ENCODE measurements at regions of chr17 and their contacts with region 1.

Region 1: DNA sequence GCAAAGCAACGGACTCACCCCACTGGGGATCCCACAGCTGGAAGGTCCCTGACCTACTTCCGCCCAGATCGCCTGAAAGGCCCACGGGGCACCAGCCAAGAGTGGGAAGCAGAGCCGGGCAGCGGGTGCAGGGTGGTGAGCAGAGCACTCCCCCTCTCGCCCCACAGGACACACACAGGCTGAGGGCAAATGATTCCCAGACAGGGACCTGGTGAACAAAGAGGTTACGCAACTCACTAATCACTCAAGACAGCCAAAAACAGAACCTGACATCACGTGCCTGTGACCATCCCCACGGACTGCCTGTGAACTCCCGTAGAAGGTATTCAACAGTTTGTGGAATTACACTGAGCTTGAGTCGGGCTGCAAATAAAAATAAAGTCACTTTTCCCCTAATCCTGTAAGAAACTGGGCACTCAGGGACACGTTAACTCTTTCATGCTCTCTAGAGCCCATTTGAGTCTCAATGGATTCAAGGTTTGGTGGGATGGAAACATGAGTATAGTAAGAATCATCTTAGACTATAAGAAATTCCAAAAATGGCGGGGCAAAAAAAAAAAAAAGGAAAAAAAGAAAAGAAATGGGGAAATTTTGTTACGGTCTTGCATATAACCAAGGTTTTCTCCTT is 396.1 kb downstream of the SOX9 start:
- DNase-seq: no peak
- ATAC-seq: peak; percentile 53
- H3K4me3 ChIP-seq: no peak overlapping the region
- H3K27ac ChIP-seq: peak overlapping the region; percentile 84
- H3K4me1 ChIP-seq: peaks cover 56% of the 10 kb centered on the region
- H3K27me3 ChIP-seq: no peaks in the 10 kb centered on the region
- CTCF ChIP-seq: peak in 2 of 3 experiments; percentile 8 to 37; a peak in 1 of 6 replicates
- EP300 ChIP-seq: no peak
- POLR2A ChIP-seq: no peak
- RAD21 ChIP-seq: no peak

Region 2: DNA sequence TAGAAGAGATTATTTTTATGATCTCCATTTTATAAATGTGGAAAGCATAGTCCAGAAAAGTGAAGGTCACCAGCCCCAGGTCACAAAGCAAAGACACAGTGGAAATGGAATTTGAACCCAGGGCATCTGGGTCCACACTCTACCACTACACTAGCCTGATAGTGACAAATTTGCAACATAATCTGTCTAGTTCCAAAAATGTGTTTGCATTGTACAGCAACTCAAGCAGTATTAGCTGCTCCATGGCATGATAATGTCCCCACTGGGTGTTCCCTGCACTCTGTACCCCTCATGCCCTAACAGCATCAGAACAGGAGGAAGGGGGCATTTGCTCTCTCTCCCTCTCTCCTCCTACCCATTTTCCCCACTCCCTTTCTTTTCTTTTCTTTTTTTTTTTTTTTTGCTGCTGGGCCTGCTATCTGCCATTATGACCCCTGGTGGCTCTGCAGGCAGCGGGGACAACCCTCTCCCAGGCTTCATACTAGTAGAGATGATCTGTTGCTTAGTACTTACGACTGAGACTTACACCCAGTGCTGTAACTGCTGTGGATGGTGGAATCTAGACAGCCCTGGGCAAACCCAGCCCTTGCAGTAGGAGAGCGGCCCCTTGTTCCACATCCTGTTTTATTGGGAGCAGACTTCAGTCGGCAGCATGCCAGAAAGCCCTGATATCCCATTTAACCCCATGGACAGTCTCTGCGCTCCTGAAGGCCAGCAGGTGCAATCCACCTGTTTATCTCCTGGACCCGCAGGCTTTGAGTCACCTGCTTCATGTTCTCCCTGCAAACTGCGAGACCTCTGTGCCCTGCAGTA is 89.7 kb before region 1 on chr17:
- CTCF ChIA-PET with region 1: interaction called, 53 read pairs
- POLR2A ChIA-PET with region 1: interaction called, 111 read pairs
- RAD21 ChIA-PET with region 1: interaction called, 361 read pairs
- SMC1A ChIA-PET with region 1: interaction called, 291 read pairs
- in situ Hi-C with region 1: loop called (anchors 5 kb)
- intact Hi-C with region 1: loop called (anchors 1 kb)
- DNase-seq: no peak
- ATAC-seq: no peak
- H3K4me3 ChIP-seq: no peak overlapping the region
- H3K27ac ChIP-seq: peak overlapping the region; percentile 21; the same call in 1 of the 2 replicates
- H3K4me1 ChIP-seq: peaks cover 33% of the 10 kb centered on the region
- H3K27me3 ChIP-seq: no peaks in the 10 kb centered on the region
- CTCF ChIP-seq: no peak
- EP300 ChIP-seq: no peak
- POLR2A ChIP-seq: no peak
- RAD21 ChIP-seq: no peak; the same call in 1 of the 2 replicates

Region 3: GRCh38 chr17:72529386-72529785 is 12.5 kb after region 1 on chr17:
- CTCF ChIA-PET with region 1: no interaction called
- POLR2A ChIA-PET with region 1: interaction called, 3 read pairs
- RAD21 ChIA-PET with region 1: interaction called, 10 read pairs
- SMC1A ChIA-PET with region 1: interaction called, 8 read pairs
- in situ Hi-C with region 1: no loop called
- intact Hi-C with region 1: no loop called
- DNase-seq: no peak
- ATAC-seq: no peak
- H3K4me3 ChIP-seq: no peak overlapping the region
- H3K27ac ChIP-seq: no peak overlapping the region
- H3K4me1 ChIP-seq: no peaks in the 10 kb centered on the region
- H3K27me3 ChIP-seq: no peaks in the 10 kb centered on the region
- CTCF ChIP-seq: no peak
- EP300 ChIP-seq: no peak
- POLR2A ChIP-seq: no peak
- RAD21 ChIP-seq: no peak

Measured in GM12878 (cell line).